Lower leg skin (tissue), 4 donors: ENCODE measurements at regions of chr4 and their contacts with region 1.

Region 1: DNA sequence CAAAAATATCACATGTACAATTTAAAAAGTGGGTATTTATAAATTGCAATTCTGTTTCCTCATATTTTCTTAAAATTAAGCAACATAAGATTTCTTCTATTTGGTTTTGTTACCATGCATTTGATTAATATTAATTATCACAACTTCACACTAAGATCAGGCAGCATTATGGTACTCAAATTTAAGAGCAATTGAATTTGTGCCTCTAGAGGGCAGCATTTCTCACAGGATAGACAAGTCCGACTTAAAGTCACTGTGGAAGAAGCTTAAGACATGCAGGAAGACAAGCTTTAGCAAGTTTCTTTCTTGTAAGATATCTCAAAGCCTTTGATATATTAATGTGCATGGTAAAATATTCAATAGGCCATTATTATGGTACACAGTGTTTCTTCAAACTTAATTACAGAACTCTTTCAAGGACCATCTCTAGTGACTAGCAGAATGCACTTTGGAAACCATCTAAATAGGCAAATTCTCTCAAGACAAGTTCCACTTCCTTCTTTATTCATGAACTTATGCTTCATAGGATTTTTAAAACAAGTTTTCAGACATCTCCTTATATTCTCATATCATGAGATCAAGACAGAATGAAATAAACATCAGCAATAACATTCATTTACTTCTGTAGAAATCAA is 35.0 kb downstream of the FBXW7 start:
- DNase-seq: peak in 1 of 2 donors; percentile 74
- H3K4me3 ChIP-seq: no peak overlapping the region
- CTCF ChIP-seq: peak in 1 of 3 donors; percentile 20
- POLR2A ChIP-seq: no peak

Region 2: GRCh38 chr4:150782921-150783320 is 1718.0 kb before region 1 on chr4:
- intact Hi-C with region 1: no loop called
- DNase-seq: no peak
- H3K4me3 ChIP-seq: no peak overlapping the region
- CTCF ChIP-seq: no peak
- POLR2A ChIP-seq: no peak

Region 3: DNA sequence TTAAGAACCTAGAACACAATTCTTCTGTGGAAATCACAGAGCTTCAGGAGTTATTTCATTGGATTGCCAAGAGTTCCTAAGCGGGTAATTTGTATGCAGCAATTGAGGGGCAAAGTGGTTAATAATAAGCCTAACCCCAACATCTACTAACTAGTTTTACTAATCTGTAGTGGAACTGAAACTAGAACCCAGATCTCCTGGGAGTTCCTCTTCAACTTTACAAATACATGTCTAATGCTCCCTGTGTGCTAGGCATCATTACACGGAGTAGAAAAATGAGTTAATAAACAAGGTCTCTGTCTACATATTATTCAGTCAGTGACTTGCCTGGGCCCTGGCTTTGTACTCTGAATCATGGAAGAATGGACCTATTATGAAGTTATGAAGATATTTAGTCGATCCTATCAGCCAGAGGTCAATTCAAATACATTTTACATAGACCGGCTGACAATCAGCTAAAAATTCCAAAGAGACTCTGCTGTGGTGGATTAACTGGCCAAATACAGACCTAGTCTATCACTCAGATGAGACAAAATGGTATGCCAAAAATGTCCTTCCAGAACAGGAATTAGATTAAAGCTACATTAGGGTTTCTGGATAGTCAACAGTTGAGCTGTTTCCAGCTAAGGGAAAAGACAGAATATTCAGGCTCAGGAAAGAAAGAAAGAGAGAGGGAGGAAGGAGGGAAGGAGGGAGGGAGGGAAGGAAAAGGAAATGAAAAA is 291.0 kb before region 1 on chr4:
- intact Hi-C with region 1: no loop called
- DNase-seq: no peak
- H3K4me3 ChIP-seq: no peak overlapping the region
- CTCF ChIP-seq: no peak
- POLR2A ChIP-seq: no peak

Region 4: DNA sequence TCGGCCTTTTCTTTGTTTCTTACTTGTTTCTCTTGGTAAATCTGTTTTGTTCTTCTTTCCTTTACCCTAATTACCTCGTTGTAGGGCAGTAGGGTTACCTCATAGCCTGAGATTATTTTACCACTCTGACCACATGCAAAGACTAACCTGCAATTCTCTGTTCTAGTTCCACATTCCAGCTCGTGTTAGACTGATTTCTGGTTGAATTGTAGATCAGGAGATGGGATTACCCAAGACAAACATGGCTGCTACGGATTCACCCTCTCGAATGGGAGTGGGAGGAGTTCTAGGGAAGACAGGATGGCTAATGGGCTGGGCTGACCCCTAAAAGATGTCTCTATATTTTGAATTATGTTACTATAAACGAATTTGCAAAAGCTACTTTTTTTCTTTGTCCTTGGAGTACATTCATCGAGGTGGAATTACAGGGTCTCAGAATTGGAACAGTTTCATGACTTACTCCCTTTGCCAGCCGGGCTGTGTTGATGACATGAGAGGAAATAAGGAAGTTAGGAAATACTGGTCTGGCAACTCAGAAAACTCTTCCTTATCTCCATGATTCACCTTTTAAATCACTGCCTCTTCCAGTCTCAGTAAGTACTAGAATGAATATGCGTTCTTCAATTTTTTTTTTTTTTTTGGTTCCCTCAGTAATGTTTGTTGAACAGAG is 71.6 kb after region 1 on chr4:
- intact Hi-C with region 1: no loop called
- DNase-seq: no peak
- H3K4me3 ChIP-seq: no peak overlapping the region
- CTCF ChIP-seq: no peak
- POLR2A ChIP-seq: no peak

Region 5: DNA sequence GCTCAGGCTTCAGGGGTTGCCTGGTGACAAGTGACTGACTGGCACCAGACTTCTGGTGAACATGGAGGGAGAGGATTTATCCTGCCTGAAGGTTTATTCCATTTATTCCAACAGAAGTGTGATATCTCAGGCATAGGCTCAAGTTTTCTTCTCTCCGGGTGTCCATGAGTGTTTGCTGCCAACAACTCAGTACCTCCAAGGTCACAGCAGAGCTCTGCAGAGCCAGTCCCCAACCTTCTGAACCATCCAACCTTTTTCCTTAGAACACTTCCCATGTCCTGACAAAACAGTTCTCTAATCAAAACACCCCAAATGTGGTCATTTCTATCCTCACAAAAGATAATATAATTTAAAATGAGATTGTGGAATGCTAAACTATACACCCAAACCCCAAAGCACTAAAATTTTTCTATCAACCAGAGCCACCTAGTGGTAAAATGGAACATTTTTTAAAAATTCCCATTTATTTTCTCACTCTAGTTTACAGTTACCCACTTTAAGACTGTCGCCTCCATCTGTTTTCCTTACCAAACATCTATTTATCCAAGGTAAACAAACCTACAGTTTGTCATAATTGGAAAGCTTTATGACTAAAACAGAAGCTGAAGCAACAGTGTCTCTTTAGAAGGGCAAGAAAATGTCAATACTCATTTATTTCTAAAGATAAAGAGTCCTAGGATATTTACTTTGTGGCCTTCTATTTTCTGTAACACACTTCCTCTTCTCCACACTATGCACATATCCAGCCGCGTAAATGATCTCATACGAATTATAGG is 139.3 kb after region 1 on chr4:
- intact Hi-C with region 1: loop called (anchors 10 kb)
- DNase-seq: no peak
- H3K4me3 ChIP-seq: no peak overlapping the region
- CTCF ChIP-seq: no peak
- POLR2A ChIP-seq: no peak

Region 6: DNA sequence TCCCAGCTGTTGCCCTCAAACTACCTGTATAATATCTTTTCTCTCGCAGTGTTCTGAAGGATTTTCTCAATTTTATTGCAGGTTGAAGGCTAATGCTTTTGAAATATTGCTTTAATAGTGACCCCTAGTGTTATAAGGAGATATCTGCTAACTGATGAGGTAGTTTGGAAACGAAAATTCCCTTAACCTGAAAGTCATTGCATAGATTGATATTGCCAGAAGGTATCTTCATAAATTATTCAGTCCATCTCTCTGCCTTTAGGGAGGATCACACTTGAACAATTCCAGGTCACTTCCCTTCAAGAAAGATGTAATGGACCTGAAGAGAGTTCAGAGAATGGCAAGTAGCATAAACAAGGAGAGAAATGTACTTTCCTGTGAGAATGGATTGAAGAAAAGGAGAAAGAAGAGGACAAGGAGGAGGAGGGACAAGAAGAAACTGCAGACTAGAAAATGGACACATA is 234.5 kb after region 1 on chr4:
- intact Hi-C with region 1: loop called (anchors 10 kb)
- DNase-seq: no peak
- H3K4me3 ChIP-seq: no peak overlapping the region
- CTCF ChIP-seq: no peak
- POLR2A ChIP-seq: no peak

Region 7: DNA sequence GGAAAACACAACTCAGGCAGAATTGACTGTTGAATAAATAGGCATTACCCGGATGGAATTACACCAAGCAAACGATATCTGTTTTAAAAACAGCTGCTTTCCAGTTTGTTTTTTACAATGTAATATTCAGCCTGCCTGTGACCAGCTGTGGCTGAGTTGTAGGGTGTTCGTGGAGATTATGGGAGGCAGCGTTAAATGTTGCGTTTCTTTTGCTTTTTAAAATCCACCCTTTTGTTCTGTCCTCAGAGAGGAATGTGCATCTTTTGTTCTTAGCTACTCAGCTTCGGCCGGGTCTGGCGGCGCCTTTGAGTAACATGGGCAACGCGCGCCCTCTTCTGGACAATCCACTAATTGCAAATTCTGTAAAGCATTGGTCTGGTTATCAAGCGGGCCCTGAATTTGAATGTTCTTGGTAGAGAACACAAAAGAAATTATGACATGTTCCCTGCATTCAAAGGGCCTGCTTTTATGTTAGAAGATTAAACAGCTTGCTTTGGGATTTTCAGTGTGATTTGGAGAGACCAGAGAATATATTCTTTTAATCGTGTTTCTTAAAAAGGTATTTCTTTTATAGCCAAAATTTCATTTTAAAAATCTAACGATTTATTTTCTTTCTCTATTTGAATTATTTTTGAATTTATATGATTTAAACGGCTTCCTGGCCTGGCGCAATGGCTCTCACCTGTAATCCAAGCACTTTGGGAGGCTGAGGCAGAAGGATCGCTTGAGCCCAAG is 627.0 kb after region 1 on chr4:
- intact Hi-C with region 1: loop called (anchors 10 kb)
- DNase-seq: peak; percentile 92 to 95
- H3K4me3 ChIP-seq: no peak overlapping the region
- CTCF ChIP-seq: peak in 1 of 3 donors; percentile 31
- POLR2A ChIP-seq: no peak